ENCODE measurements at regions of chr17 and their contacts with region 1.

Region 1: DNA sequence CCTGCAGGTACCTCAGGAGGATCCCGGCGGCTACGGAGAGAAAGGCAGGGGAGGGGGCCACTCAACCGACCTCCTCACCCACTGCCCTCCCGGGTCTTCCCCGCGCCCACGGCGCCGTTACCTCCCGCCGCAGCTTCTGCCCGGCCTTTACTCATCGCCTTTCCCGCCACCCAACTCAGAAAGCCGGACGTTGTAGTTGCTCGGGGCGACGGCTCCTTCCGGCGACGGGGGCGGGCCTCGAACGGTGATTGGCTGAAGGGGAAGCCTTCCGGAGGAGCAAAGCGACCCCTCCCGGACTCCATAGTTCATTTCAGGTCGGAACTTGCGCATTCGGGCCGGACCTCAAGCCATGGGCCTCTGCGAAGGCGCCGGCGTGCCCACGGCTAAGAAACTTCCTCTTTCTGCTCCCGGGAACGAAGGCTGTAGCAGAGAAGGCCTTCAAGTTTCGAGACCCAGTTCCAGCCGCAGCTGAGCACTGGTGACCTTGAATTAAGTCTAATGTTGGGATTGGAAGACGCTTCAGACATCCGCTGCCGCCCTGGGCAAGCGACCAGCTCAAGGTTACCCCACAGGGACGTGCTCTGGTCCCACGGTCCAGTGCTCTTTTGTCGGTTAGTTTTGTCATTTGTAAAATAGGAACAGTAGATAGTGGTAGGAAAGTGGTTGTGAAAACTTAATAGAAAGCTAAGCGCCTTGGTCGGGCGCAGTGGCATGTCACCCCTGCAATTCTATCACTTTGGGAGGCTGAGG is at the start of gene PSMC3IP:
- DNase-seq: peak; percentile 97
- ATAC-seq: peak; percentile 91
- H3K4me3 Mint-ChIP-seq: peak within 1 kb of the TSS; percentile 98
- H3K27ac Mint-ChIP-seq: peak within 1 kb of the TSS; percentile 96
- H3K4me1 Mint-ChIP-seq: peaks cover 49% of the 10 kb centered on the region
- H3K27me3 Mint-ChIP-seq: no peaks in the 10 kb centered on the region
- total RNA-seq, gene PSMC3IP: 19.2 to 21.8 TPM

Region 2: DNA sequence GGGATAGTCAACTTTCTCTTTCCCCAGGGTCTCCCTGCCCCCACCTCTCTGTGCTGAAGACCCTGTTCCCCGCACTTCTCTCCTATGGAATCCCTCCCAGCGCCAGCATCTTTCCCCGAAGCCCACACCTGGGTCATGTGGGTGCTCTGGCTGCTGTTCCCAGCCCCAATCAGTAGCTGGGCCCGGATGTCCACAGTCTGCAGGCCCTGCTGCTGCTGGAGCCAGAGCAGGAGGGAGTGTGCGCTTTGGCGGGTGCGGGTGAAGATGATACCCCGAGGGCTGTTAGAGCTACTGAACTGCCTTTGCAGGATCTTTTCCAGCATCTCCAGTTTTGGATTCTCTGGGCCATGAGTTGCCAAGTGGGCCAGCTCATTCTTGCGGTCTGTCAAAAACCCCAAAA is 472.1 kb before region 1 on chr17:
- CTCF ChIA-PET with region 1: no interaction called
- POLR2A ChIA-PET with region 1: no interaction called
- DNase-seq: no peak
- ATAC-seq: no peak
- H3K4me3 Mint-ChIP-seq: no peak overlapping the region
- H3K27ac Mint-ChIP-seq: no peak overlapping the region
- H3K4me1 Mint-ChIP-seq: peaks cover 32% of the 10 kb centered on the region
- H3K27me3 Mint-ChIP-seq: no peaks in the 10 kb centered on the region

Region 3: GRCh38 chr17:42329025-42329976 is 248.4 kb before region 1 on chr17:
- CTCF ChIA-PET with region 1: no interaction called
- POLR2A ChIA-PET with region 1: no interaction called
- DNase-seq: no peak
- ATAC-seq: no peak
- H3K4me3 Mint-ChIP-seq: no peak overlapping the region
- H3K27ac Mint-ChIP-seq: no peak overlapping the region
- H3K4me1 Mint-ChIP-seq: peaks cover 8% of the 10 kb centered on the region
- H3K27me3 Mint-ChIP-seq: no peaks in the 10 kb centered on the region

Region 4: DNA sequence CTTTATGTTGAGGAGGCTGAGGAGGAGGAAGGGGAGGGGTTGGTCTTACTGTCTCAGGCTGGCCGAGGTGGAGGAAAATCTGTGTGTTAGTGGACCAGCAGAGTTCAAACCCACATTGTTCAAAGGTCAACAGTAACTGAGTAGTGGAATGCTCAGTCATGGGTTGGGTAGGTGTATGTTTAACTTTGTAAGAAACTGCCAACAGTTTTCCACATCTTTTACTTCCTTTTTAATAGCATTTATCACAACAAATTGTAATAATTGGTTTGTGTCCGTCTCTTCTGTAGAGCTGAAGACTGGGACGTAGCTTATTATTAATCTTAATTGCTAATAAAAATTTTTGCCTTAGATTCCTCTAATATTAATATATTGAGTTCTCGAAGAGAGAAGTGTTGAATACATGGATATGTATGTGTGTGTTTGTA is 113.7 kb before region 1 on chr17:
- CTCF ChIA-PET with region 1: no interaction called
- POLR2A ChIA-PET with region 1: no interaction called
- DNase-seq: no peak
- ATAC-seq: no peak
- H3K4me3 Mint-ChIP-seq: no peak overlapping the region
- H3K27ac Mint-ChIP-seq: no peak overlapping the region
- H3K4me1 Mint-ChIP-seq: peaks cover 16% of the 10 kb centered on the region
- H3K27me3 Mint-ChIP-seq: peaks cover 13% of the 10 kb centered on the region

Region 5: DNA sequence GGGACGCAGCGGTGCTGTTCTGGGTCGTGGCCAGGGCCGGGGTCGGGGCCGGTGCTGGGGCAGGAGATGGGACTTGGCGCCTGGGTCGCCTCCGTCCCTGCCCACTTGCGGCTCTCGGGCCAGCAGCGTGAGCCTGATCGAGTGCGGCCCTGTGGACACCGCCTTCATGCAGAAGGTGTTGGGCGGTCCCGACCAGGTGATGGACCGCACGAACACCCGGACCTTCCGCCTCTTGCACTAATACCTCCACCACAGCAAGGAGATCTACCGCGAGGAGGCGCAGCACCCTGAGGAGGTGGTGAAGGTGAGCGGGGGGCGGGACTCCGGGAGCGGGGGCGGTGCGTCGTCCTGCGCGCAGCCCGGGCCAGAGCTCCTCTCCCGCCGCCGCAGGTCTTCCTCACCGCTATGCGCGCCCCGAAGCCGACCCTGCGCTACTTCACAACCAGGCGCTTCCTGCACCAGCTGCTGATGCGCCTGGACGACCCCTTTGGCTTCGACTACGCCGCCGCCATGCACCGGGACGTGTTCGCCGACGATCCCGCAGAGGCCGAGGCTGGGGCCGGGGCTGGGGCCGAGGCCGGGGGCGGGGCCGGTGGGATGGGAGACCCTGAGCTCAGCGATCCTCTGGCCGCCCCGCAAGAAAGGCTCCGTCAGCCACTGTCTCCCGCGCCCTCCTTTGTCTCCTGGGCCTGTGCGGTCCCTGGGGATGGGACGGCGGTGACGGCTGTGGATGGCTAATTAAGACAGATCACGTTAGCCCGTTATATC is 29.5 kb before region 1 on chr17:
- CTCF ChIA-PET with region 1: interaction called, 15 read pairs
- POLR2A ChIA-PET with region 1: no interaction called
- DNase-seq: peak; percentile 84
- ATAC-seq: peak; percentile 89
- H3K4me3 Mint-ChIP-seq: peak overlapping the region; percentile 38
- H3K27ac Mint-ChIP-seq: no peak overlapping the region
- H3K4me1 Mint-ChIP-seq: peaks cover 22% of the 10 kb centered on the region
- H3K27me3 Mint-ChIP-seq: no peaks in the 10 kb centered on the region

Region 6: DNA sequence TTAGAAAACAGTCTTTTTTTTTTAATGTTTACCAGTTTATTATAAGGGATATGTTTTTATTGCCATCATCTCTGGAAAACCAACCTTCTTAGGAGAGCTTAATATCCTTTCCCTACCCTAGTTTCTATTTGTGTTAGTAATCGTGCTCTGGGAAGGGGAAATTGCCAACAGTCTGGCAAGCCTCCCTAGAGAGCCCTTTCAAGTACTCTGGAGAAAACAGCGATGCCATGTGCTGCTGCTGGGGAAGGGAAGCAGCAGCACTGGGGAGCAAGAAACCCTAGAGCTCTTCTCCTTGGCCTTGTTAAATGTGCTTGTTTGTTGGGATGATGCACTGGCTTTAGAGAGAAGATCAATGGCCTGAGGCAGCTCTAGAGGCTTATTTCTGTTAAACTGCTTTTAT is 21.2 kb after region 1 on chr17:
- CTCF ChIA-PET with region 1: interaction called, 24 read pairs
- POLR2A ChIA-PET with region 1: no interaction called
- DNase-seq: no peak
- ATAC-seq: no peak
- H3K4me3 Mint-ChIP-seq: no peak overlapping the region
- H3K27ac Mint-ChIP-seq: no peak overlapping the region
- H3K4me1 Mint-ChIP-seq: peaks cover 10% of the 10 kb centered on the region
- H3K27me3 Mint-ChIP-seq: no peaks in the 10 kb centered on the region

Region 7: GRCh38 chr17:42677008-42677857 is 99.5 kb after region 1 on chr17:
- CTCF ChIA-PET with region 1: interaction called, 83 read pairs
- POLR2A ChIA-PET with region 1: interaction called, 17 read pairs
- DNase-seq: peak; percentile 100
- ATAC-seq: peak; percentile 77
- H3K4me3 Mint-ChIP-seq: peak overlapping the region; percentile 82
- H3K27ac Mint-ChIP-seq: peak overlapping the region; percentile 80
- H3K4me1 Mint-ChIP-seq: peaks cover 57% of the 10 kb centered on the region
- H3K27me3 Mint-ChIP-seq: peaks cover 44% of the 10 kb centered on the region

Region 8: DNA sequence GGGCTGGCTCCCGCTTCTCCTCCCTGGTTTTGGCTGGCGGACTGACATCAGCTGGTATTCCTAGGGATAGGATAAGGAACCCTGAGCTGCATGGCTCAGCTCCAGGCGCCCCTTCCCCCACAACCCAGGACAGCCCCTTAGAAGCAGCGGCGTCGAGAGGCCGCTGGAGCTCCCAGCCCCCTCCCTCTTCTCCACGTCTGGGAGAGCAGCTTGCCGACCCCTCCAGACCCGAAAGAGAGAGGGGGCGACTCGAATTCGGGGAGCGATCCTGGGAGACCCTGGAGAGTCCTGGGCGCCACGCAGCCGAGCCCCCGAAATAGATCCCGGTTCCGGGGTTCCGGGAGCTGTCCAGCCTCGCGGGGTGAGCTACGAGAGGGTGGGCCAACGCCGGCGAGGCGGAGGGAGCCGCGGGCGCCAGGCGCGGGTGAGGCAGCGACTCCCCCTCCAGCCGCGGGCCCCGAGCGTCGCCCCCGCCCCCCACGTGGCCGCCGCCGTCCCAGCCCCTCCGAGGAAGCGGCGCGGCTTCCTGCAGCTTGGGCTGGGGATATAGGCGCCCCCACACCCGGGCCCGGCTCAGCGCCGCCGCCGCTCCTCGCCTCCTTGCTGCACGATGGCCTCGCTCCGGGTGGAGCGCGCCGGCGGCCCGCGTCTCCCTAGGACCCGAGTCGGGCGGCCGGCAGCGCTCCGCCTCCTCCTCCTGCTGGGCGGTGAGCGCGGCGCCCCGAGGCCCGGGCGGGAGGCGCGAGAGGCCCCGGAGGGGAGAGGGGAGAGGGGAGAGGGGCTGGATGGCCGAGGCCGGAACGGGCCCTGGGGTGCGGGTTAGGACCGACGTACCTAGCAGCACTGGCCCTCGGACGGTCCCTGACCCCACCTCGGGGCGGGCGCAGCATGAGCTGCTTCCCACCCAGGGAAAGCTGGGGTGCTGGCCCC is 183.2 kb after region 1 on chr17 and contains the start of gene RAMP2:
- CTCF ChIA-PET with region 1: interaction called, 113 read pairs
- POLR2A ChIA-PET with region 1: interaction called, 7 read pairs
- DNase-seq: no peak
- ATAC-seq: peak; percentile 48
- H3K4me3 Mint-ChIP-seq: no peak within 1 kb of the TSS
- H3K27ac Mint-ChIP-seq: no peak within 1 kb of the TSS
- H3K4me1 Mint-ChIP-seq: peaks cover 4% of the 10 kb centered on the region
- H3K27me3 Mint-ChIP-seq: peaks cover 54% of the 10 kb centered on the region
- total RNA-seq, gene RAMP2: not detected

Region 9: GRCh38 chr17:42819944-42820535 is 242.3 kb after region 1 on chr17:
- CTCF ChIA-PET with region 1: interaction called, 26 read pairs
- POLR2A ChIA-PET with region 1: interaction called, 6 read pairs
- DNase-seq: peak; percentile 79
- ATAC-seq: no peak
- H3K4me3 Mint-ChIP-seq: no peak overlapping the region
- H3K27ac Mint-ChIP-seq: peak overlapping the region; percentile 3
- H3K4me1 Mint-ChIP-seq: peaks cover 28% of the 10 kb centered on the region
- H3K27me3 Mint-ChIP-seq: peaks cover under 1% of the 10 kb centered on the region